ENCODE measurements at regions of chr12 and their contacts with region 1.

Region 1: GRCh38 chr12:92827836-92828431 is 101.2 kb downstream of the EEA1 start:
- DNase-seq: peak; percentile 69
- H3K4me3 ChIP-seq: no peak overlapping the region
- H3K27ac ChIP-seq: no peak overlapping the region
- H3K4me1 ChIP-seq: no peaks in the 10 kb centered on the region
- H3K27me3 ChIP-seq: no peaks in the 10 kb centered on the region
- CTCF ChIP-seq: peak; percentile 61 to 67
- POLR2A ChIP-seq: no peak

Region 2: GRCh38 chr12:92814584-92814983 is 13.3 kb before region 1 on chr12:
- CTCF ChIA-PET with region 1: interaction called, 21 read pairs
- POLR2A ChIA-PET with region 1: no interaction called
- dilution Hi-C with region 1: no loop called
- intact Hi-C with region 1: no loop called
- DNase-seq: no peak
- H3K4me3 ChIP-seq: no peak overlapping the region
- H3K27ac ChIP-seq: no peak overlapping the region
- H3K4me1 ChIP-seq: no peaks in the 10 kb centered on the region
- H3K27me3 ChIP-seq: no peaks in the 10 kb centered on the region
- CTCF ChIP-seq: no peak
- POLR2A ChIP-seq: no peak

Region 3: GRCh38 chr12:92844151-92844763 is 16.3 kb after region 1 on chr12:
- CTCF ChIA-PET with region 1: interaction called, 26 read pairs
- POLR2A ChIA-PET with region 1: no interaction called
- dilution Hi-C with region 1: no loop called
- intact Hi-C with region 1: no loop called
- DNase-seq: no peak
- H3K4me3 ChIP-seq: no peak overlapping the region
- H3K27ac ChIP-seq: no peak overlapping the region
- H3K4me1 ChIP-seq: no peaks in the 10 kb centered on the region
- H3K27me3 ChIP-seq: no peaks in the 10 kb centered on the region
- CTCF ChIP-seq: no peak
- POLR2A ChIP-seq: no peak